MCF 10A (cell line): ENCODE measurements at regions of chr6 and their contacts with region 1.

Region 1: DNA sequence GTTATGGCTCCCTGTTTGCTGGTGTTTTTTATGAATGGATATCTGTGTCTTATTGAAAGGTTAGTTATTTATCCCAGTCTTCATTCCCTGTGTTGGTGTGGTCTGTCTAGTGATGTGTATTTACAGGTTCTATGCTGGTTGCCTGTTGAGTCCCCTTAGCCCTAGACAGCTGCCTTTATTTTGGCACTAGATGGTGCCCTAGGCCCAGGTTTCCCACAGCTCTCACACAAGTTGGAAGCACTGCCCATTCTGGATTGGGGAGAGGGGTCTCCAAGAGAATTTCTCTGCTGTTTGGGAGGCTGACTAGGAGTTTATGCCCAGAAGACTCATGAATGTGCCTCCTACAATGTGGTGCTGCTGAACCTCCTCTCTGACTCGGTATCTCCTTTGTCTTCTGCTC is 12.4 kb downstream of the GRM1 start:
- DNase-seq: peak; percentile 66
- H3K4me3 Mint-ChIP-seq: no peak overlapping the region
- H3K27ac Mint-ChIP-seq: no peak overlapping the region
- H3K4me1 Mint-ChIP-seq: no peaks in the 10 kb centered on the region
- H3K27me3 Mint-ChIP-seq: peaks cover 86% of the 10 kb centered on the region
- CTCF ChIP-seq: peak; percentile 51

Region 2: DNA sequence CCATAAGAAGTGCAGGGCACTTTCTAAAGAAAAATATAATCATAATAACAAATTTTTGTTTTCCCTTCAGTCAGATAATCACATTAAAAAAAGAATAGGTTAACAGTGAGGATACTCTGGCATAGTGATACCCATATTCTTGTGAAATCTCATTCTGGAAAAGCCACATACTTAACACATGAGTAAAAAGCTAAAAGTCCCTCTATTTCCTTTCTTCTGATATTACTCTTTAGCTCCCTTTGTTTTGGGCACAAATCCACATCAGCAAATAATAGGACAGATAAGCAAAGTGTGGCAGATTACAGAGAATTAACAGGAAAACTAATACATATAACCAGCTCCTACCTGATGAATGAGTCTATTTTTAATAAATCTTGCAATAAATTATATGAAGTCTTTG is 93.0 kb before region 1 on chr6:
- CTCF ChIA-PET with region 1: no interaction called
- POLR2A ChIA-PET with region 1: no interaction called
- intact Hi-C with region 1: no loop called
- DNase-seq: no peak
- H3K4me3 Mint-ChIP-seq: no peak overlapping the region
- H3K27ac Mint-ChIP-seq: no peak overlapping the region
- H3K4me1 Mint-ChIP-seq: no peaks in the 10 kb centered on the region
- H3K27me3 Mint-ChIP-seq: no peaks in the 10 kb centered on the region
- CTCF ChIP-seq: no peak

Region 3: GRCh38 chr6:146526192-146526591 is 484.9 kb after region 1 on chr6:
- CTCF ChIA-PET with region 1: interaction called, 10 read pairs
- POLR2A ChIA-PET with region 1: no interaction called
- intact Hi-C with region 1: loop called (anchors 1 kb)
- DNase-seq: peak; percentile 6
- H3K4me3 Mint-ChIP-seq: no peak overlapping the region
- H3K27ac Mint-ChIP-seq: no peak overlapping the region
- H3K4me1 Mint-ChIP-seq: no peaks in the 10 kb centered on the region
- H3K27me3 Mint-ChIP-seq: no peaks in the 10 kb centered on the region
- CTCF ChIP-seq: peak; percentile 21

Region 4: GRCh38 chr6:146543211-146543939 is 502.1 kb after region 1 on chr6 and contains the start of gene RAB32:
- CTCF ChIA-PET with region 1: interaction called, 6 read pairs
- POLR2A ChIA-PET with region 1: interaction called, 6 read pairs
- intact Hi-C with region 1: loop called (anchors 5 kb)
- DNase-seq: peak; percentile 93
- H3K4me3 Mint-ChIP-seq: peak within 1 kb of the TSS; percentile 94
- H3K27ac Mint-ChIP-seq: peak within 1 kb of the TSS; percentile 97
- H3K4me1 Mint-ChIP-seq: peaks cover 13% of the 10 kb centered on the region
- H3K27me3 Mint-ChIP-seq: no peaks in the 10 kb centered on the region
- CTCF ChIP-seq: peak; percentile 64
- total RNA-seq, gene RAB32: 39.7 and 73.6 TPM in 2 replicates

Region 5: DNA sequence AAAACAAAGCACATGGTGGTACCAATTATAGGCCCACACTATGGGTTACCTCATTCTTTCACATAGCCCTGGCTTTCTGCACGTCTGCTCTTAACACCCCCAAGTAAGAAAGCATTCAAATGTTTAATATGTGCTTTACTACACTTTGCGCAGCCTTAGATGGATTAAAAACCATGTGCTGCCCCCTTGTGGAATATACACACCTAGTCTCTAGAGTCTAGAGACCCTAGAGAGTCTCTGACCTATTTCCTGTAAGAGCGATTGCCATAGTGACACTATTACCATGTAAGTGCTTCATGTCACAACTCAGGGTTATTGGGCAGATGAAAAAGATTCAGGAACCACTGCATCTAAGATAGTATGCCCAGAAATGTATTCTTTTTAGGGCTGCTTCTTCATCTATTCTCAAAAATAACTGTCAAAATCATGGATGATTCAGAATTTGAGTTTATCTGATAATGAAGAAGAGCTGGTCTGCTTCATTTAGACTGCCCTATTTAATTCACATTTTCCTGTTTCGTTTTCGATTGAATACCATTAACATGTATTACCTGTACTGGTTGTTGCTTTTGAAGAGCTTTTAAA is 743.8 kb after region 1 on chr6:
- CTCF ChIA-PET with region 1: interaction called, 10 read pairs
- POLR2A ChIA-PET with region 1: no interaction called
- intact Hi-C with region 1: loop called (anchors 2 kb)
- DNase-seq: peak; percentile 75
- H3K4me3 Mint-ChIP-seq: no peak overlapping the region
- H3K27ac Mint-ChIP-seq: no peak overlapping the region
- H3K4me1 Mint-ChIP-seq: no peaks in the 10 kb centered on the region
- H3K27me3 Mint-ChIP-seq: no peaks in the 10 kb centered on the region
- CTCF ChIP-seq: peak; percentile 54